Activated CD4-positive, alpha-beta T cell treated with anti-CD3 and anti-CD28 coated beads for 36 hours (primary cell): ENCODE measurements at regions of chr15 and their contacts with region 1.

Region 1: GRCh38 chr15:46151786-46152185 is 517.0 kb downstream of the SQOR start:
- DNase-seq: no peak
- ATAC-seq: no peak
- H3K4me3 Mint-ChIP-seq: no peak overlapping the region
- H3K27ac Mint-ChIP-seq: no peak overlapping the region
- H3K4me1 Mint-ChIP-seq: no peaks in the 10 kb centered on the region
- H3K27me3 Mint-ChIP-seq: no peaks in the 10 kb centered on the region

Region 2: DNA sequence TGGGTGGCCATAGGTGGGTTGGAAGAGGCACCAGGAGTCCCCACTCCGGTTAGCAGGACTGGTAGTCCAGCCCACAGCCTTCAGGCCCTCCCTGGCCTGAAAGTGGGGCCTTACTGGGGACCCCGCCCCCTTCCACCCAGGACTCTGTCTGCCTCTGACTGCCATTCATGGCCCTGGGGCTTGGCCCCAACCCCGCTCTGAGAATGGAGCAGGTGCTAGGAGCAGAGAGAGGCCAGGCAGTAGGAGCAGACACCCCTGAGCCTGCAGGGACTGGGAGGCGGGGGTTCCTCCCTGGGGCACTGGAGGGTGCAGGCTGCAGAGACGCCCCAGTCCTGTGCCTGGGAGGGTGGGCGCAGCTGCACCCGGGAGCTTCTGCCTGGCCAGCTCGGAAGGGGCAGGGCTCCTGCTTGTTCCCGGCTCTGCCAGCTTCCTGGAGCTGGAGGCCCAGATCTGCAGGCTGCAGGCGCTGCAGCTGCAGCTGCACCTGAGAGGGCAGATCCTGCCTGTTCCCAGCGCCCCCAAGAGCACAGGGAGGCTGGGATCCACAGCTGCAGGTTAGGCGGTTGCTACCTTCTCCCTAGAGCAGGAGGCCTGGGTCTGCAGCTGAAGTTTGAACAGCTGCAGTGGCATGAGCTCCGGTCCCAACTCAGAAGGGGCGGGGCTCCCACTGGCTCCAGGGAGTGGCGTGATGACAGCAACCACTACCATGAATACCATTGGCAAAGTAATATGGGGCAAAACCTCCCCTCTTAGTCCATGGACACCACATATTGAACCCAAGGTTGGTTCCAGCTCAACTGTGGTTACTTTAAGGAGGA is 322.2 kb before region 1 on chr15:
- CTCF ChIA-PET with region 1: no interaction called
- POLR2A ChIA-PET with region 1: no interaction called
- intact Hi-C with region 1: loop called in 1 of 2 experiments (anchors 10 kb)
- DNase-seq: no peak
- ATAC-seq: no peak
- H3K4me3 Mint-ChIP-seq: no peak overlapping the region
- H3K27ac Mint-ChIP-seq: no peak overlapping the region
- H3K4me1 Mint-ChIP-seq: no peaks in the 10 kb centered on the region
- H3K27me3 Mint-ChIP-seq: no peaks in the 10 kb centered on the region